AG04449 (cell line): ENCODE measurements at regions of chr1 and their contacts with region 1.

Region 1: DNA sequence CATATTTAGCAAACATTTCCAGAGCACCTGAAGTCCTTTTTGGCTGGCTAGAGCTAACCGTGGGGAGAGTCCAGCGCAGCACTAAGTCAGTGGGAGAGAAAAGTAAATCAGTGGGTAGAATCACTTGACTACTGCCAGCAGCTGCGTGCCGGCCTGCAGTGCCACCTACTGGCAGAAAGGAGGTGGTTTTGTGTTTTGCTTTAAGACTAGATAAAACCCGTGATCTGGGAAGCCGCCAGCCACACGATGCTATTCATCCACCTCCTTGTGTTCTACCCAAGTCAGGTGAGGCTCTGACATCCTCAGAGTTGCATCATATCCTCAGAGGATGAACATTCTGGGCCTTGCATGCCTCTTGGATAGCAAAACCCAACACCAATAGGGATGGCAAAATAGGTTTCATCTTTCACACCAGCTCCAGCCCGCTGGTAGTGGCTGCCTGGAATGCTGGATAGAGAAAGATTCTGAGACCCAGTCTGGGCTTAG is 14.1 kb upstream of the HEYL start:
- DNase-seq: no peak
- H3K4me3 ChIP-seq: no peak overlapping the region
- CTCF ChIP-seq: peak; percentile 87

Region 2: DNA sequence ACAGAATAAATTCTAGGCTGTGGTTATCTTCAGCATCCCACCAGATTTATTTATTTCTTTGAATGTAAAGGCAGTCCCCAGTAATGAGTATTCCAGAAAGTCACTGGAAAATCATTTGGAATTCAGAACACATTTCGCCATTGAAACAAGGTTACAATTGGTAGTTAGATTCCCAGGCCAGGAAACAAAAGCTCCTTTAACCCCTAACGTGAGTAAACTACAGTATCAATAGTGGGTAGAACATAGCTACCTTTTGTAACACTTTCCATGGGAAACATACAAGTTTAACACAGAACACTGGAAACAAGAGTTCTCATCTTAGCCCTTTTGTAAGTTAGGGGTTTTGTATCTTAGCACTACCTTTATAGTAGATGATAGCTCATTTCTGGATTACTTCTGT is 215.5 kb before region 1 on chr1:
- CTCF ChIA-PET with region 1: no interaction called
- POLR2A ChIA-PET with region 1: no interaction called
- DNase-seq: no peak
- H3K4me3 ChIP-seq: no peak overlapping the region
- CTCF ChIP-seq: no peak

Region 3: GRCh38 chr1:39596163-39596562 is 57.4 kb before region 1 on chr1:
- CTCF ChIA-PET with region 1: interaction called, 670 read pairs
- POLR2A ChIA-PET with region 1: no interaction called
- DNase-seq: no peak
- H3K4me3 ChIP-seq: no peak overlapping the region
- CTCF ChIP-seq: no peak

Region 4: DNA sequence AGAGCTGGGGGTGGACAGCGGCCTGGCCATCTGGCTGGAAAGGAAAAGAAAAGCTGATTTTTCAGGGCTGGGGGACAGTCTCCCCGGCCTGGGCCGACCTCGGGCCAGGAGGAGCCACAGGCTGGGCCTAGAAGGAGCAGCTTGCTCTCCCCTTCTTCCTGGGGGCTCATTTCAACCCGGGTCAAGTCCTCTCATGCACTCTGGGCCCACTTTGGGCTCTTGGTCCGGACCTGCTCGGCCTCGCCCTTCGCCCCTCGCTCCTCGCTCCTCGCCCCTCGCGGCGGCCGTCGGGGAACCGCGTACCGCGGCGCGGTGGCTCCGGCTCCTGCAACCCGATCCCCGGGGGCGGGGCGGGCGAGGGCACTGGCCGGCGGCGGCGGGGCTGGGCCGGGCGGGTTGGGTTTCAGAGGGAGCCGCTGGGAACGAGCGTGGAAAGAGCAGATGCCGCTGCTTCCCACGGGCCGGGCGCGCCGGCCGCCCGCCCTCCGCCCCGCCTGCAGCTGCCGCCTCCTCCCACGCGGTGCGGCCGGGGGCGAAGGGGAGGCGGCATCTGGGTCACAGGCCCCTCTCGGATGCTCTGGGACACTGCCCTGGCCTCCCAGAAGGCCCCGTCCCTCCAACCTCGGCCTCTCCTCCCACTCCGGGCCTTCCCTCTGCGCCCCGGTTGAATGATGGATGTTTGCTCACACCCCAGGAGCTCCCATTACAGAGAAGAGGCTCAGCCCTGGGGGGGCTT is 20.7 kb before region 1 on chr1:
- CTCF ChIA-PET with region 1: interaction called, 19 read pairs
- POLR2A ChIA-PET with region 1: no interaction called
- DNase-seq: no peak
- H3K4me3 ChIP-seq: peak overlapping the region; percentile 19
- CTCF ChIP-seq: no peak

Region 5: DNA sequence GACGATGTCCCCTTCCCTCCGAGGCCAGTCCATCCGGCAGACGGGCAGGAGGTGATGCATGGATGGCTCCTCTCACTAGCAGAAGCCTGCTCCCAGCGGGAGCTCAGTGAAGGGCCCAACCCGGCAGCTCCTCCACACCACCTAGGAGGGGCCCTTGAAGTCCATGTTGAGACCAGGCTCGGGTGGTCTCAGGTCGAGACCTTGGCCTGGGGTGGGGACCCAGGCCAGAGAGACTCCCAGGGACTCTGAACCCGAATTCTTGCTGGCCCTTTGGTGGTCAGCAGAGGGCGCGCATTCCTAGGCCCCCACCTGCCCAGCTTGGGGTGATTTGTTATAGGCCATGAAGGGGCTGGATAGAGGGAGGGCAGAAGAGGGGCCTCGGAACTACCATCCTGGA is 19.0 kb after region 1 on chr1:
- CTCF ChIA-PET with region 1: interaction called, 362 read pairs
- POLR2A ChIA-PET with region 1: no interaction called
- DNase-seq: no peak
- H3K4me3 ChIP-seq: peak overlapping the region; percentile 47
- CTCF ChIP-seq: peak; percentile 50